Activated naive CD4-positive, alpha-beta T cell treated with anti-CD3 and anti-CD28 coated beads for 36 hours (primary cell): ENCODE measurements at regions of chr3 and their contacts with region 1.

Region 1: DNA sequence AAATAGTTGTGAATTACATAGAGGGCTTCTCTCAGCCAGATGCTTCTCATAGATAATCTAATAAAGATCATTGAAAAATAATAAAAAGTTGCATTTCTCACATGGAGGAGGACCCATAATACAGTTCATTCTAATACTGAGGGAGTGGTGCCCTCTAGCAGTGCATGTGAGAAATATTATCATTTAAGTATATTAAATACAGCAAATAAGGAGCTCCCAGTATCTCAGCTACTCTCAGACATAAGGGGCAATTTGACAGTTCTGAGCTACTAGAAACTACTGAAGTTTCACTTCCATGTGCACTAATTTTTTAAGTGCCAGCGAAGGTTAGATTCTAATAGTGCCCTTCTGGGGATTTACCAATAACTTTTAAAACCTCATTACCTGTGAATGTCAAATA is 188.3 kb downstream of the IL5RA start:
- DNase-seq: peak; percentile 10
- H3K4me3 Mint-ChIP-seq: no peak overlapping the region
- H3K27ac Mint-ChIP-seq: no peak overlapping the region
- H3K4me1 Mint-ChIP-seq: no peaks in the 10 kb centered on the region
- H3K27me3 Mint-ChIP-seq: no peaks in the 10 kb centered on the region

Region 2: GRCh38 chr3:1082108-1082507 is 1839.8 kb before region 1 on chr3:
- CTCF ChIA-PET with region 1: no interaction called
- intact Hi-C with region 1: loop called (anchors 10 kb)
- DNase-seq: peak; percentile 17
- H3K4me3 Mint-ChIP-seq: no peak overlapping the region
- H3K27ac Mint-ChIP-seq: no peak overlapping the region
- H3K4me1 Mint-ChIP-seq: no peaks in the 10 kb centered on the region
- H3K27me3 Mint-ChIP-seq: no peaks in the 10 kb centered on the region

Region 3: GRCh38 chr3:2765002-2765579 is 156.8 kb before region 1 on chr3:
- CTCF ChIA-PET with region 1: interaction called, 3 read pairs
- intact Hi-C with region 1: loop called (anchors 1 kb)
- DNase-seq: peak; percentile 34
- H3K4me3 Mint-ChIP-seq: no peak overlapping the region
- H3K27ac Mint-ChIP-seq: no peak overlapping the region
- H3K4me1 Mint-ChIP-seq: no peaks in the 10 kb centered on the region
- H3K27me3 Mint-ChIP-seq: peaks cover 2% of the 10 kb centered on the region

Region 4: GRCh38 chr3:2870724-2871333 is 51.1 kb before region 1 on chr3:
- CTCF ChIA-PET with region 1: no interaction called
- intact Hi-C with region 1: no loop called
- DNase-seq: no peak
- H3K4me3 Mint-ChIP-seq: no peak overlapping the region
- H3K27ac Mint-ChIP-seq: no peak overlapping the region
- H3K4me1 Mint-ChIP-seq: no peaks in the 10 kb centered on the region
- H3K27me3 Mint-ChIP-seq: peaks cover 10% of the 10 kb centered on the region